ENCODE measurements at regions of chr1 and their contacts with region 1.

Region 1: DNA sequence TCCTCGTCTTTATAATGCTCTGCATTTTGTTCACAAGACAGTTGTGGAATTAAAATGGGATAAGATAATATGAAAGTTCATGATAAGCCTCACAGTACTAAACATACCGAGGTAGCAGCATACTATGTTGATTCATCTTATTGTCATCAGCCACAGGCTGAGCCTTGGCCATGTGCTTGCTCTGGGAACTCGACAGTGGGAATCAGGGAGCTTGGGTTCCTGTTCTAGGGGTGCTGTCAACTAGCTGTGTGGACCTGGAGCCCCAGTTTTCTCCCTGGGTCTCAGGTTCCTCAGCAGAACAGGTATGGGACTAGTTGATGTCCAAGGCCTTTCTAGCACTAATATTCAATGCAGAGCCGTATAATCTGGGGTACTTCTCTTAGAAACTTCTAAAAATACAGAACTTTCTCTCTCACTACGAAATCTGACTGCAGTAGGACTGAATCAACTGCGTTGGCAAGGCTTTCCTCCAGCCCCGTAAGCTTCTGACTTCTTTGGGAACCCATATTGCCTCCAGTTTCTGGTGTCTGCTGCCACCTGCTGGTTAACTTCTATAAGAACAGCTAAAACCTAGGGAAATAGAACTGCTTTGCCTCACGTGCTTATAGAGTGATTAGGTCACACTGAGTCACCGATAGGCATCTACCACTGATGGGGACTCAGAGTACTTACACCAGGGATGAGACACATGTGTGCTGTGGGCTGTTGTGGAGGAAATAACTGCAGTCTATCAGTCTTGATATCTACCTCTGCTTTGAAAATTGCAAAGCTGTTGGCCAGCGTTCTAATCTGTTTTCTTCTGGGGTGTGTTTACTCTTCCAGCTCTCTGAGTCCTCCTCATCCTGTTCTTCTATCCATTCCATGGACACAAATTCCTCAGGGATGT is 110.9 kb downstream of the RGL1 start:
- DNase-seq: peak; percentile 88 to 92 (median 90)
- H3K4me3 ChIP-seq: peak overlapping the region in 4 of 7 experiments; percentile 15 to 27 (median 24)
- H3K27ac ChIP-seq: no peak overlapping the region
- H3K4me1 ChIP-seq: peaks cover 10 to 35% (median 19%) of the 10 kb centered on the region in 4 experiments
- H3K27me3 ChIP-seq: peaks cover 0 to 2% (median 0%) of the 10 kb centered on the region in 5 experiments

Region 2: GRCh38 chr1:183628537-183628936 is 287.3 kb before region 1 on chr1:
- CTCF ChIA-PET with region 1: no interaction called
- POLR2A ChIA-PET with region 1: no interaction called
- DNase-seq: no peak
- H3K4me3 ChIP-seq: no peak overlapping the region
- H3K27ac ChIP-seq: no peak overlapping the region
- H3K4me1 ChIP-seq: peaks cover 13 to 25% (median 15%) of the 10 kb centered on the region in 4 experiments
- H3K27me3 ChIP-seq: no peaks in the 10 kb centered on the region

Region 3: GRCh38 chr1:183655562-183656075 is 260.2 kb before region 1 on chr1:
- CTCF ChIA-PET with region 1: interaction called, 138 read pairs
- POLR2A ChIA-PET with region 1: interaction called, 4 read pairs
- DNase-seq: peak; percentile 69 to 80 (median 72)
- H3K4me3 ChIP-seq: no peak overlapping the region
- H3K27ac ChIP-seq: no peak overlapping the region
- H3K4me1 ChIP-seq: peaks cover 0 to 9% (median 6%) of the 10 kb centered on the region in 4 experiments
- H3K27me3 ChIP-seq: no peaks in the 10 kb centered on the region

Region 4: DNA sequence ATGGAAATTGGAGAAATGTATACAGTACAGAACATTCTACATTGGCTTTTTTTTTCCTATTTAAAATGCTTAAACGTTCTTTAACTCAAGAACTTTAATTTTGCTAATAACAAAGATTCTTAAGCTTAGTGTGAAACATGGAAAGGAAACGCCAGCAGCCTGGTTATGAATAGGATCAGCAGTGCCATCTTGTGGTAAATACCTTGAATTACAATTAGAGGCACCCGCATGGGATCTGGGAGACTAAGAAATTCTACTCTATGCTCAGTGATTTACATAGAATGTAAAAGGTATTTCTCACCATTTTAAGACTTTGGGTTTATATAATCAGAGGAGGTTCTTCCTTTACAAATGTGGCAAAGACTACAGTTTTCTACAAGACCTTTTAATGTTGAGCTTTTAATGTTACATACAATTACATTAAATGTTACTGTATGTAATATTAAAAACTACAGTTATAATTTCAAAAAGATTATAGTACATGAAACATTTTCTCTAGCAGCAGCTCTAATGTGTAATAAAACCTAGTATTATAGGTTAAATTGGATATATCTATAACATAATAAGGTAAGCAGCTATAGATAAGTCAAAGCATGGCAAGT is 230.7 kb before region 1 on chr1:
- CTCF ChIA-PET with region 1: interaction called, 18 read pairs
- POLR2A ChIA-PET with region 1: no interaction called
- DNase-seq: peak; percentile 36 to 75 (median 66)
- H3K4me3 ChIP-seq: no peak overlapping the region
- H3K27ac ChIP-seq: no peak overlapping the region
- H3K4me1 ChIP-seq: no peaks in the 10 kb centered on the region
- H3K27me3 ChIP-seq: no peaks in the 10 kb centered on the region

Region 5: GRCh38 chr1:183896466-183897048 is 19.3 kb before region 1 on chr1:
- CTCF ChIA-PET with region 1: interaction called, 32 read pairs
- POLR2A ChIA-PET with region 1: interaction called, 3 read pairs
- DNase-seq: peak; percentile 92 to 97 (median 96)
- H3K4me3 ChIP-seq: no peak overlapping the region
- H3K27ac ChIP-seq: no peak overlapping the region
- H3K4me1 ChIP-seq: peaks cover 9 to 41% (median 15%) of the 10 kb centered on the region in 4 experiments
- H3K27me3 ChIP-seq: peaks cover 0 to 61% (median 27%) of the 10 kb centered on the region in 5 experiments

Measured in common myeloid progenitor, CD34-positive (primary cell).